HEK293T (cell line): ENCODE measurements at regions of chr15 and their contacts with region 1.

Region 1: DNA sequence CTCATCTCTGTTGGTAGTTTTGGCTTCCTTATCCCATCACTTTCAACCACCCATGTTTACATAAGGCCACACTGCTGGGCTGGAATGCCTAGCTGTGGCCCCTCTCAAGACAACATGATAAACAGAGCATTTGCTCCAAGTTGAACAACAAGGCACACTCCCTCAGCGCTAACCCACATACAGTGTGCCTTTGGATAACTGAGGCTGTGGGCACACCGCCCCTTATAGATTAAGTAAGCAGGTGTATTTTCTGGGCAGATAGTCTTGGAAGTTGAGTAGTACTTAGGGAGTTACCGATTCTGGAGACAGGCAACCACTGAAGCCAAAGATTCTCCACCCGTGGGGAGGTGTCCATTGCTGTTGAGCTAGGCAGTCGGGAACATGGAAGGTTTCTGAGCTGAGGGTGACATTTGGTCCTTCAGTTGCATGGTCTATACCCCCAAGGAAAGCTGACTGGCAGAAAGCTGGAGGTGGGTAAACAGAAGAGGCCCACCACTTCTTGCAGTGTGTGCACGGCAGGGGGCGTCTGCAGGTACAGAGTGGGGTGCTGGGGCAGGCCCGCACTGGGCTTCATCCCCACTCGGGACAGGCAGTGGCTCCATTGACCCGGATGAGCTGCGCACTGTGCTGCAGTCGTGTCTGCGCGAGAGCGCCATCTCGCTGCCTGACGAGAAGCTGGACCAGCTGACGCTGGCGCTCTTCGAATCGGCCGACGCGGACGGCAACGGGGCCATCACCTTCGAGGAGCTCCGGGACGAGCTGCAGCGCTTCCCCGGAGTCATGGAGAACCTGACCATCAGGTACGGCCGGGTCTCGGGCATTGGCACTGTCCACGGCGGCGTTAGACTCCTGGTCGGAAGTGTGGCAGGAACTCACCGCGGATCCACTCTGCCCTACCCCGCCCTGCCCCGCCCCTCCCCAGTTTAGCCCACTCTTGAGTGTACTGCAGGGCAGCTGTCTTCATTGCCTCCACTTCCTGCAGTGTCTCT is 16.8 kb downstream of the NOX5 start:
- DNase-seq: peak; percentile 61

Region 2: DNA sequence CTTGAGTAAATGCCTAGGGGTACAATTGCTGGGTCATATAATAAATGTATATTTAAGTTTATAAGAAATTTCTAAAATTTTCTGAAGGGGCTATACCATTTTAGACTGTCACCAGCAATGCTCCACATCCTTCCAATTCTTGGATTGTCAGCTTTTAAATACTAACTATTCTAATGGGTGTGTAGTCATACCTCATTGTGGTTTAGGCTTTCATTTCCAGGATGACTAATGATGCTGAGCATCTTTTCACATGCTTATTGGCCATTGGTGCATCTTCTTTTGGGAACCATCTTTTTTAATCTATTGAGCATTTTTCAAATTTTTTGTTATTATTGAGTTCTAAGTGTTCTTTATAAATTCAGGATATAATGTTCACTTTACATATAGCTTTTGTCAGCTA is 505.0 kb before region 1 on chr15:
- CTCF ChIA-PET with region 1: no interaction called
- POLR2A ChIA-PET with region 1: no interaction called
- DNase-seq: no peak

Region 3: GRCh38 chr15:69045808-69046207 is 14.5 kb after region 1 on chr15:
- CTCF ChIA-PET with region 1: interaction called, 12 read pairs
- POLR2A ChIA-PET with region 1: no interaction called
- DNase-seq: peak; percentile 46